Calu3 (cell line): ENCODE measurements at regions of chr2 and their contacts with region 1.

Region 1: DNA sequence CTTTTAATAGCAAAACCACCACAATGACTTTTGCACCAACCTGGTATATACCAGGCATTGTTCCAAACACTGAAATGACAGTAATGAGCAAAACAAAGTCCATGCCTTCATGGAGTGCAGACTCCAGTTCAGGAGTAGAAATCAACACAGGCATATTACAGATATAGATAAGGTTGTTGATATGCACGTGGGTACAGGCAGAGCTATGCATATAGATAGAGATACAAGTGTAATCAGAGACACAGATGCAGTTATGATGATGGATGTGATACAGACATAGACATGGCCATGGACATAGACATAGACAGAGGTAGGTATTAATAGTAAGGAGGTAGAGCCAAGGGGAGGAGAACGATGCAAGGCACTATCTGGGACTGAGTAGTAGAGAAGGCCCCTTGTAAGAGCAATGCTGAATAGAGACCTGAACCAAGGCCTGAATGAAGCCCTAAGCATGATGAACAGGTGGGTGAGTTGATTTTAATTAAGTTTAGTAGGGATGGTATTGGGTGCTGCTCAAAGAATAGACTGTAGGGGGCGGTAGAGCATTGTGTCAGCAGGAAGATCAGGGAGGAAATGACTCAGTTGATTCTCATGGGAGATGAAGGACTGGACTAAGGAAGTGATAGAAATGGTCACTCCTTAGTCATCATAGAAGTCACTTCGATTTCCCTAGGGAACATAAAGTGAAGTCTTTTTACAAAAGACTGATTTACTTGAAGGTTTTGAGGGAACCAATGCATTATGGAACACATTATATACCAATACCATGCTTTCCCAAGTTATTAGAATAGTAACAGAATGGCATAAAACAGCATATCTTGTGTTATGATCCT is 39.4 kb downstream of the CMPK2 start:
- DNase-seq: peak; percentile 66
- H3K4me3 Mint-ChIP-seq: no peak overlapping the region
- H3K27ac Mint-ChIP-seq: no peak overlapping the region
- H3K4me1 Mint-ChIP-seq: peaks cover 11% of the 10 kb centered on the region
- H3K27me3 Mint-ChIP-seq: peaks cover 25% of the 10 kb centered on the region
- CTCF ChIP-seq: peak; percentile 63

Region 2: DNA sequence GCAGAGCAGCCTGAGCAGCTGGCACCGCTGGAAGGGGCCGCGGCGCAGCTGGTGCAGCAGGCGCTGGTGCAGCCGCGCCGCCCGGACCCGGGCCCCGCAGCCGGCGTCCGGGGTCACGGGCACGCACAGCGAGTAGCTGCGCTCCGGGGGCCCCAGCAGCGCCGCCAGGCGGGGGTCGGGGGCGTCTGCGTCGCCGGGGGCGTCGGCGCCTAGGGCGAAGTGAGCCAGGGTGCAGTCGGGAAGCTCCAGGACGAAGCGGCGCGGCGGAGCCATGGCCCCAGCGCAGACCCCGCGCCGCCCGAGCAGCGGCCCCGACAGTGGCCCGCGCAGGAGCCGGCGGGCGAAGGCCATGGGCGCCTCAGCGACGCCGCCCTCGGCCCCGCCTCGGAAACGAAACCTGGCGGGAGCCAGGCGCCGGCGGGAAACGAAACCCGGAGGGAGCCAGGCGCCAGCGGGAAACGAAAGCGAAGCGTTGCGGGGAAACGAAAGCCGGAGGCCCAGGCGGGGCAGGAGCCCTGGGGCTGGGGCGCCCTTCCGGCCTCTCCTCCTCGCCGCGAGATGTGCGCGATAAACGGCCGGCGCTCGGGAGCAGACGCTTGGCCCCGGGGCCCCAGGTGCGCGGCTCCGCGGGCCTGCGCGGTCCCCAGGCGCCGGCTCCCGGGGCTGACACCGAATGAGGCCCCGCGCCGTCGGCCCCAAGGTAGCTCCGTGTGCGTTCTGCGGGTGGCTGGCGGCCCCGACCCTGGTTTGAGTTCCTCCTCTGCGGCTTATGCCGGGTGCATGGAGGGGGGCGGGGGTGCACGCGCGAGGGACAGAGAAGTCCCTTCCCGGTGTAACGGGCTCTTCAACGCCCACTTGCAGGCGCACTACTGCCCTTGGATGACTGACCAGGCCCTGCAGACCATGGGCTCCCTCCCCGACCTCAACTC is 39.3 kb after region 1 on chr2 and contains the start of gene CMPK2:
- CTCF ChIA-PET with region 1: no interaction called
- intact Hi-C with region 1: loop called (anchors 1 kb)
- DNase-seq: peak; percentile 71
- H3K4me3 Mint-ChIP-seq: peak within 1 kb of the TSS; percentile 78
- H3K27ac Mint-ChIP-seq: peak within 1 kb of the TSS; percentile 47
- H3K4me1 Mint-ChIP-seq: peaks cover 14% of the 10 kb centered on the region
- H3K27me3 Mint-ChIP-seq: no peaks in the 10 kb centered on the region
- CTCF ChIP-seq: no peak
- total RNA-seq, gene CMPK2: 26.6 and 76.6 TPM in 2 replicates

Region 3: DNA sequence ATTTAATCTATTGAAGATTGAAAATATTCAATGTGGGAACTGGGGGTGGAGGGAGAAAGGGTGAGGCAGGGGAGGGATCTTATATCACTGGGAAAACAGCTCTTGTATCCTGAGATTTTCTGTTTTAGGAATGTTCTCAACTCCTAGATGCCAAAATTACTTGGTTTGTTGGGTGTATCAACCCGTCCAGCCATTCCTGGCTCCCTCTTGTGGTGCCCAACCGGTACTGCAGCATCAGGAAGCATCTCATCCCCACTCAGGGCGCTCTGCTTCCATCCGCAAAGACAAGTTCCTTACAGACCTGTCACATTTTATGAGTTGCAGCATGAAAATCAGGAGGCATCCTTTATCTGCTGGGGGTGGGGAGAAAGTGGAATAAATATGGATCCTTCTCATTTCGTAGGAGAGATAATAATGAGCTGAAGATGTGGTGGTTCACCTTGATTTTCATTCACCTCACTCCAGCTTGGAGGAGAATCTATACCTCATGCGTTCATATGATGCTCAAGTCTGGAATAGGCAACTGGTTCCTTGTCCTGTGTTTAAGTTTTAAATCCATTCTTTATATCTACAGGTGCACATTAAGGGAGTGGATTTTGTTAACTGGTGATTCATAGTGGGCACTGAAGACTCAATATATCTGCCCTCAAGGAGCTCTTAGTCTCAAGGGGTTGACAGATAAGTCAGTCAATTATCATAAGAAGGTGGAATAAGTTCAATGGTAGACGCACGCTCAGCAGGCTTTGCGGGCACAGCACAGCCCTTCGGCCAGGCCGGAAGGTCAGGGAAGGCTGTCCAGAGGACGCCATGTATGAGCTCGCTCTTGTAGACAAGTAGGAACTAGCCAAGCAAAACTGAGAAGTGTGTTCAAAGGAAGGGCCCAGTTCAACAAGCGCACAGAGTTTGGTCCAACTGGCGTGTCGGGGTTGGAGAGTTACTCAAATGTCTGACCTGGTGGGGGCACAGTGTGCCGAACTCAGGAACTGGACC is 218.3 kb after region 1 on chr2:
- CTCF ChIA-PET with region 1: no interaction called
- intact Hi-C with region 1: loop called (anchors 5 kb)
- DNase-seq: peak; percentile 67
- H3K4me3 Mint-ChIP-seq: no peak overlapping the region
- H3K27ac Mint-ChIP-seq: no peak overlapping the region
- H3K4me1 Mint-ChIP-seq: no peaks in the 10 kb centered on the region
- H3K27me3 Mint-ChIP-seq: no peaks in the 10 kb centered on the region
- CTCF ChIP-seq: peak; percentile 92

Region 4: DNA sequence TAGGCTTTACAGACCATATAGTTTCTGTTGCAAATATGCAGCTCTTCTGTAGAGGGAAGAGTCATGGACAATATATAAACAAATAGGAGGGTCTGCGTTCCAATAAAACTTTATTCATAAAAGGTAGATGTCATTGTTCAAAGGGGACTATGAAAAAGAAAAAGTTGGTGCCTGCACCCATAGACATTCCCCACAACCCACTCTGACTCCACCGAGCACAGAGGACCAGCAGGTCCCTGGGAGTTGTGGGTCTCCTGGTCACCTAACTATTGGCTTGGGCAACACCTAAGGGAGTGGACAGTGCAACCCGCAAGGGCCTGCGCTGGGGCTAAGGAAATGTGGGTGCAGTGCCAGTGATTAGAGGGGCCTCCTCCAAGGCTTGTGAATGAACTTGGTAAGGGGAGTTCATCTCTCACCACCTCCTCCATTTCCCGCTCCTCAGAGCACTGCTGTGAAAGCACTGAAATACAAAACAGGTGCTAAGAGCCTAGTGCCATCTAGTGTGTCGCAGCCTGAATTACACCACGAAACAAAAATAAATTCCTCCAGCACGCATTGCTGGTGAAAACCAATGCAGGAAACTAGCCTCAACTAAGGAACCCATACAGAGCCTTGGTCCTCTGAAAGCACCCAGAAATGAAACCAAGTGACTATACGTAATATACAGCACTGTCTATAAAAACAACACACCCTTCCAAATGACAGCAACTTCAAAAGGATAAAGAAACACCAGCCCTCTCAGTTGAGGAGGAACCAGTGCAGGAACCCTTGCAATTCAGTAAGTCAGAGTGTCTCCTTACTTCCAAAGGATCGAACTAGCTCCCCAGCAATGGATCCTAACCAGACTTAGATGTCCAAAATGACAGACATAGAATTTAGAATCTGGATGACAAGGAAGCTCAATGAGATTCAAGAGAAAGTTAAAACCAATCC is 257.5 kb after region 1 on chr2:
- CTCF ChIA-PET with region 1: no interaction called
- intact Hi-C with region 1: loop called (anchors 1 kb)
- DNase-seq: peak; percentile 40
- H3K4me3 Mint-ChIP-seq: no peak overlapping the region
- H3K27ac Mint-ChIP-seq: no peak overlapping the region
- H3K4me1 Mint-ChIP-seq: no peaks in the 10 kb centered on the region
- H3K27me3 Mint-ChIP-seq: peaks cover 17% of the 10 kb centered on the region
- CTCF ChIP-seq: peak; percentile 64